A673 (cell line): ENCODE measurements at regions of chr7 and their contacts with region 1.

Region 1: GRCh38 chr7:100469227-100470044 is 5.4 kb upstream of the SPACDR start:
- DNase-seq: peak; percentile 81
- H3K4me3 ChIP-seq: no peak overlapping the region
- H3K27ac ChIP-seq: peak overlapping the region; percentile 35
- H3K4me1 ChIP-seq: peaks cover 28% of the 10 kb centered on the region
- H3K27me3 ChIP-seq: no peaks in the 10 kb centered on the region
- CTCF ChIP-seq: peak; percentile 89

Region 2: DNA sequence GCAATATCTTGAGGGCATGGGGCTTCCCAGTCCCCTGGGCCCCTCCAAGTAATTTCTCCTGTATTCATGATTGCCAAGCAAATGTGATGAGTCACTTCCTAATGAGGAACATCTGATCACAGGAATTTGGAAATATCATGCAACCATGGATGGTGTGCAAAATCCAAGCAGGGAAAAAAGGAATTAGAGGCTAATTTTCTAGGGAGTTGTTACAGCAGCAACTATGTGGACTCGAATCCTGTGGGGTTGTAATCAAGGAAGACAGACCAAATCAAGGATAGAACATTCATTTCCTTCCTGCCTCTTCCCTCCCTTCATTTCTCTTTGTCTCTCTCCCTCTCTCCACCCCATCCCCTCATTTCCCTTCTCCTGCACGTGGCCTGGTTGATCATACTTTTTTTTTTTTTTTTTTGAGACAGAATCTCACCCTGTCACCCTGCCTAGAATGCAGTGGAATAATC is 45.7 kb after region 1 on chr7:
- CTCF ChIA-PET with region 1: no interaction called
- POLR2A ChIA-PET with region 1: no interaction called
- intact Hi-C with region 1: loop called (anchors 2 kb)
- DNase-seq: peak; percentile 89
- H3K4me3 ChIP-seq: no peak overlapping the region
- H3K27ac ChIP-seq: peak overlapping the region; percentile 73
- H3K4me1 ChIP-seq: peaks cover 16% of the 10 kb centered on the region
- H3K27me3 ChIP-seq: no peaks in the 10 kb centered on the region
- CTCF ChIP-seq: no peak

Region 3: DNA sequence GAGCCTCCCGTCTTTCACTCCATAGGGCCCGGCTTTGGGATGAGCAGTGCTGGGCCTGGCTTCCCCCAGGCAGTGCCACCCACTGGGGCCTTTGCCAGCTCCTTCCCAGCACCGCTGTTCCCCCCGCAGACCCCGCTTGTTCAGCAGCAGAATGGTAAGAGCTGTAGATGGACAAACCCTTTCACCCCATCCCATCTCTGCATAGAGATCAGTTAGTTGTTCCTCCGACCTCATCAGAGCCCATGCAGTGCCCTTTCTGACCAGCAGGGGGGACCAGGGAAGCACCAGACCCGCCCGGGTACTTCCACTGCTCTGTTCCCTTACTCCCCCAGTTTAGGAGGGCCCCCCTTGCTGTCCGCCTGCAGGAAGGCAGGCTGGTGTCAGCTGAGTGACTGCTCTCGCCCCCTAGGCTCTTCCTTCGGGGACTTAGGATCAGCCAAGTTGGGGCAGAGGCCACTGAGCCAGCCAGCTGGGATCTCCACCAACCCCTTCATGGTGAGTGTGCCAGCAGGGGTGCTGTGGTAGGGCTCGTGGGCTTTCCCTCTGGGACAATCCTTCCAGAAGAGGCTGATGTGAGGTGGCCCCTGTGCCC is 94.5 kb after region 1 on chr7:
- CTCF ChIA-PET with region 1: interaction called, 24 read pairs
- POLR2A ChIA-PET with region 1: no interaction called
- intact Hi-C with region 1: loop called (anchors 1 kb)
- DNase-seq: peak; percentile 80
- H3K4me3 ChIP-seq: no peak overlapping the region
- H3K27ac ChIP-seq: no peak overlapping the region
- H3K4me1 ChIP-seq: no peaks in the 10 kb centered on the region
- H3K27me3 ChIP-seq: no peaks in the 10 kb centered on the region
- CTCF ChIP-seq: peak; percentile 95

Region 4: DNA sequence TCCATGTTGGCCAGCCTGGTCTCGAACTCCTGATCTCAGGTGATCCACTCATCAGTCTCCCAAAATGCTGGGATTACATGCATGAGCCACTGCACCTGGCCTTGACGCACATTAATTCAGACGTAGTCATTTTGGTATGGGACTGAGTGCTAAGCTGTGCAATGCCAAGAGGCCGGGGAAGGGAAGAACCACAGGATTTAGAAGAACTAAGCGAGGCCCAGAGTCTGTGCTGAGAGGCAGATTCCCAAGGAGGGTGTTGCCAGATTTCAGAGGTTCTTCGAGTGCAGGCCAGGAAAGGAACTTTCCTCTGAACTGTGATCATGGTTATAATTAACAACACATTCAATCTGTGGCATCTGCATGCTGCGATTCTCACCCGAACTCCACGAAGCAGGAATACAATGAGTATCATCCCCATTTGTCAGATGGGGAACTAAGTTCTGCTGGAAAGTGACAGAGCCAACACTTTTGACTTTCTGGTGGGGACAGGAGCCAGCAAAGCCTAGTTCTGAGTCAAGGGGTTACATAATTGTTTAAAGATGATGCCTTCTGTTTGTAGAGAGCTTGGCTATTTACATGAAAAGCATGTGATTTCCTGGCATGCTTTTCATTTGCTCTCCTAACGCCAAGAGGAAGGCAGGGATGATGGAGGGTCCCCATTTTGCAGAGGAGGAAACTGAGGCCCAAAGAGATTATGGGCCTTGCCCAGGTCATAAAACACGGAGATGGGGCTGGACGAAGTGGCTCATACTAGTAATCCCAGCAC is 257.7 kb after region 1 on chr7:
- CTCF ChIA-PET with region 1: no interaction called
- POLR2A ChIA-PET with region 1: no interaction called
- intact Hi-C with region 1: loop called (anchors 1 kb)
- DNase-seq: no peak
- H3K4me3 ChIP-seq: no peak overlapping the region
- H3K27ac ChIP-seq: no peak overlapping the region
- H3K4me1 ChIP-seq: no peaks in the 10 kb centered on the region
- H3K27me3 ChIP-seq: peaks cover 8% of the 10 kb centered on the region
- CTCF ChIP-seq: no peak

Region 5: GRCh38 chr7:100852048-100852872 is 382.8 kb after region 1 on chr7 and contains the start of gene SLC12A9:
- CTCF ChIA-PET with region 1: interaction called, 14 read pairs
- POLR2A ChIA-PET with region 1: no interaction called
- intact Hi-C with region 1: no loop called
- DNase-seq: peak; percentile 97
- H3K4me3 ChIP-seq: peak within 1 kb of the TSS; percentile 76
- H3K27ac ChIP-seq: peak within 1 kb of the TSS; percentile 24
- H3K4me1 ChIP-seq: peaks cover 9% of the 10 kb centered on the region
- H3K27me3 ChIP-seq: no peaks in the 10 kb centered on the region
- CTCF ChIP-seq: peak; percentile 95
- total RNA-seq, gene SLC12A9: 23.8 and 26.1 TPM in 2 replicates